ENCODE measurements at regions of chr22 and their contacts with region 1.

Region 1: GRCh38 chr22:22903355-22903777 is 15.8 kb downstream of the IGLL5 start:
- DNase-seq: no peak
- ATAC-seq: peak; percentile 0; the same call in 1 of the 3 replicates
- H3K4me3 ChIP-seq: no peak overlapping the region
- H3K27ac ChIP-seq: peak overlapping the region; percentile 93
- H3K4me1 ChIP-seq: peaks cover 28% of the 10 kb centered on the region
- H3K27me3 ChIP-seq: no peaks in the 10 kb centered on the region
- CTCF ChIP-seq: no peak
- EP300 ChIP-seq: no peak
- POLR2A ChIP-seq: no peak
- RAD21 ChIP-seq: no peak

Region 2: DNA sequence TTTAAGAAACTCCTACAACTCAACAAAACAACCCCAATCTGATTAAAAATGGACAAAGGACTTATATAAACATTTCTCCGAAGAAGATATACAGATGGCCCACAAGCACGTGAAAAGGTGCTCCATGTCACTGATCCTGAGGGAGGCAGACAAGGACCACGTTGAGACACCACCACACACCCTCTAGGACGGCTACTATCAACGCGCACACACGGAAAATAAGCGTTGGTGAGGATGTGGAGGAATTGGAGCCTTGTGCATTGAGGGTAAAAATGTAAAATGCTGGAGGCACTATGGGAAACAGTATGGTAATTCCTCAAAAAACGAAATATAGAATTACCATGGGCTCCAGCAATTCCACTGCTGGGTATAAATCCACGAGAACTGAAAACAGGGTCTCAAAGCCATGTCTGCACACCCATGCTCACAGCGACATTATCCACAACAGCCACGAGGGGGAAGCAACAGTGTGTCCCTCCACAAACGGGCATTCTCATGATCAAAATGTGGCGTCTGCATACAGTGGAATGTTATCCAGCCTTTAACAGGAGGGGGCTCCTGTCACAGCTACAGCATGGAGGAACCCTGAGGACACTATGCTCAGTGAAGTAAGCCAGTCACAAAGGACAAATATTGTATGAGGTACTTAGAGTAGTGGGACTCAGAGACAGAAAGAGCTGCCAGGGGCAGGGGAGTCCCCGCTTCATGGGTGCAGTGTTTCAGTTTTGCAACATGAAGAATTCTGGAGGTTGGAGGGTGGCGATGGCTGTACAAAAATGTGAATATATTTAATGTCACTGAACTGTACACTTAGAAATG is 1190.3 kb before region 1 on chr22:
- CTCF ChIA-PET with region 1: no interaction called
- POLR2A ChIA-PET with region 1: no interaction called
- RAD21 ChIA-PET with region 1: no interaction called
- SMC1A ChIA-PET with region 1: no interaction called
- in situ Hi-C with region 1: loop called (anchors 25 kb)
- intact Hi-C with region 1: no loop called
- DNase-seq: peak; percentile 25
- ATAC-seq: peak; percentile 97
- H3K4me3 ChIP-seq: no peak overlapping the region
- H3K27ac ChIP-seq: no peak overlapping the region
- H3K4me1 ChIP-seq: no peaks in the 10 kb centered on the region
- H3K27me3 ChIP-seq: no peaks in the 10 kb centered on the region
- CTCF ChIP-seq: peak; percentile 79 to 91 (median 84)
- EP300 ChIP-seq: no peak
- POLR2A ChIP-seq: no peak
- RAD21 ChIP-seq: peak; percentile 93

Region 3: DNA sequence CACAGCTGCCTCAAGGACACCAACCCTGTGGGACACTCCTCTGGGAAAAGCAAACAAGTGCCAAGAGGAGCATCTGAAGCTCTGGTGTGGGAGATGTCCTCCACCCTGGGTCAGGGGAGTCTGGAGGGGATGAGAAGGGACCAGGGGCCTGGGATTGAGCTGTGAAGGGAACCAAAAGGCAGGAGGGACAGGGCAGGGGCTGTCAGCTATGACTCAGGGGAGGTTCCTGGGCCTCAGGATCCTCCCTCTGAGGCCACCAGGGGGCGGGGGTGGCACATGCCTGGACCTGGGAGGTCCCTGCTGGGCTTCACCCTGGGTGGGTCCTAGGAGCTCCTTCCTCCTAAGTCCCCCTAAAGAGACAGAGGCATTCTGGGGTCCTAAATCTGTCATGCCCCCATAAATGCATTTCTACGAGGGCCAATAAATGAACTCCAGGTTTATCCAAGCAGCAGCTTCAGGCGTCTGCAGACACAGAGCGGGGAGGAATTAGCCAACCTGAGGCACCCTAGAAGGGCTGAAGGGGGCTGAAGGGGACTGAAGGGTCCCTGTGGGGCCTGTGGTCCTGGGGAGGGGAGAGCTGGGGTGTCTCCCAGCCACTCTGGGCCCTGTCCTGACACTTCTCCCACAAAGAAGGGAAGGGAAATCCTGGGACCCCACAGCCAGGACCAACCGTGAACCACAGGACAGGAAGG is 47.6 kb before region 1 on chr22:
- CTCF ChIA-PET with region 1: interaction called, 34 read pairs
- POLR2A ChIA-PET with region 1: interaction called, 37 read pairs
- RAD21 ChIA-PET with region 1: interaction called, 39 read pairs
- SMC1A ChIA-PET with region 1: interaction called, 36 read pairs
- in situ Hi-C with region 1: no loop called
- intact Hi-C with region 1: loop called (anchors 1 kb)
- DNase-seq: no peak
- ATAC-seq: peak; percentile 95
- H3K4me3 ChIP-seq: no peak overlapping the region
- H3K27ac ChIP-seq: peak overlapping the region; percentile 73
- H3K4me1 ChIP-seq: no peaks in the 10 kb centered on the region
- H3K27me3 ChIP-seq: no peaks in the 10 kb centered on the region
- CTCF ChIP-seq: peak; percentile 27 to 70 (median 60); a peak in 5 of 6 replicates
- EP300 ChIP-seq: no peak
- POLR2A ChIP-seq: no peak
- RAD21 ChIP-seq: no peak

Region 4: DNA sequence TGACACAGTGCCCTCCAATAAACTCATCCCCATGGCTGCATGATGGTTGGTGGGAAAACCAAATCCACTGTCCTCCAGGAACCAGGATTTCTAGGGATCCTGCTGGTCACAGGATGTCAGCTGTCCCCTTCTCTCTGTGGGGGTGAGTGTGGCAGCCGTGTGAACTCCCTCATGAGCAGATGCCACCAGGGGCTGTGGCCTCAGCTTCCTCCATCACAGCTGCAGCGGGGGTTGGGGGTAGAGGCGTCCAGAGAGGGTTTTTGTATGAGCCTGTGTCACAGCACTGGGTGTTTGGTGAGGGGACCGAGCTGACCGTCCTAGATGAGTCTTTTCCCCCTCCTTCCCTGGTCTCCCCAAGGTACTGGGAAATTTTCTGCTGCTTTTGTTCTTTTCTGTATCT is 10.6 kb after region 1 on chr22:
- CTCF ChIA-PET with region 1: interaction called, 4 read pairs
- POLR2A ChIA-PET with region 1: interaction called, 21 read pairs
- RAD21 ChIA-PET with region 1: interaction called, 4 read pairs
- SMC1A ChIA-PET with region 1: interaction called, 18 read pairs
- in situ Hi-C with region 1: no loop called
- intact Hi-C with region 1: no loop called
- DNase-seq: no peak
- ATAC-seq: peak; percentile 61
- H3K4me3 ChIP-seq: no peak overlapping the region
- H3K27ac ChIP-seq: no peak overlapping the region
- H3K4me1 ChIP-seq: peaks cover 31% of the 10 kb centered on the region
- H3K27me3 ChIP-seq: no peaks in the 10 kb centered on the region
- CTCF ChIP-seq: no peak
- EP300 ChIP-seq: no peak
- POLR2A ChIP-seq: no peak
- RAD21 ChIP-seq: no peak

Region 5: GRCh38 chr22:22928666-22929380 is 25.5 kb after region 1 on chr22:
- CTCF ChIA-PET with region 1: interaction called, 117 read pairs
- POLR2A ChIA-PET with region 1: interaction called, 153 read pairs
- RAD21 ChIA-PET with region 1: interaction called, 91 read pairs
- SMC1A ChIA-PET with region 1: interaction called, 154 read pairs
- in situ Hi-C with region 1: no loop called
- intact Hi-C with region 1: loop called (anchors 1 kb)
- DNase-seq: peak; percentile 99
- ATAC-seq: peak; percentile 87
- H3K4me3 ChIP-seq: peak overlapping the region; percentile 14; the same call in 1 of the 2 replicates
- H3K27ac ChIP-seq: peak overlapping the region; percentile 99
- H3K4me1 ChIP-seq: peaks cover 81% of the 10 kb centered on the region
- H3K27me3 ChIP-seq: no peaks in the 10 kb centered on the region
- CTCF ChIP-seq: no peak
- EP300 ChIP-seq: peak; percentile 86 to 89; a peak in 3 of 4 replicates
- POLR2A ChIP-seq: peak; percentile 88
- RAD21 ChIP-seq: peak; percentile 27; the same call in 1 of the 2 replicates

Region 6: DNA sequence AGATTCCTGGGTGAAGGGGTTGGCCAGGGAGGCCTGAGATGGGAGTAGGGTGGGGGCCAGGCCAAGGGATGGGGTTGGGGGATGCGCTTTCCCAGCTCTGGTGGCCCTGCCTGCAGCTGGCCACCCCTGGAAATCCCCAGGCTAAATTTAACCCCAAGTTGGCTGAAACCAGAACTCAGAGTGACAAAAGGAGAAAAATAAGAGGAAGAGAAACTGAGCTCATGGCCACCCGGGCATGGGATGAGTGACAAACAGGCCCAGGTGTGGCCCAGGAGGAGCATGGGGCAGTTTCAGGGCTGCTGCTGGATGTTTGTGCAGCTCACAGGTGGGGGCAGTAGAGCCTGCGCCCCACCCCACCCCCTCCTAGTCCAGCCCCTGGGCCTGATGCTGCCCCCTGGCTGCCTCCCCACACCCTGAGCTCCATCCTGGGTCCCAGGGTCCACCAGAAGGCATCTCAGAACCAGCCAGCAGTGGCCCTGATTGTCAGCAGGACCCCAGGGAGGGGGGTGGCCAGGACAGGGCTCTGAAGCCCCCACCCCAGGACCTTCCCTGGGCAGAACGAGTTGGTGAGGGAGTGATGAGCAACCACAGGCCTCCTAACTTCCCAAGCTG is 32.3 kb after region 1 on chr22:
- CTCF ChIA-PET with region 1: interaction called, 117 read pairs
- POLR2A ChIA-PET with region 1: interaction called, 153 read pairs
- RAD21 ChIA-PET with region 1: interaction called, 91 read pairs
- SMC1A ChIA-PET with region 1: interaction called, 154 read pairs
- in situ Hi-C with region 1: loop called (anchors 5 kb)
- intact Hi-C with region 1: loop called (anchors 1 kb)
- DNase-seq: peak; percentile 99
- ATAC-seq: peak; percentile 84
- H3K4me3 ChIP-seq: peak overlapping the region; percentile 24; the same call in 1 of the 2 replicates
- H3K27ac ChIP-seq: peak overlapping the region; percentile 99
- H3K4me1 ChIP-seq: peaks cover 92% of the 10 kb centered on the region
- H3K27me3 ChIP-seq: no peaks in the 10 kb centered on the region
- CTCF ChIP-seq: peak; percentile 53 to 83 (median 71)
- EP300 ChIP-seq: peak; percentile 100
- POLR2A ChIP-seq: no peak; the same call in 1 of the 2 replicates
- RAD21 ChIP-seq: peak; percentile 75

Region 7: DNA sequence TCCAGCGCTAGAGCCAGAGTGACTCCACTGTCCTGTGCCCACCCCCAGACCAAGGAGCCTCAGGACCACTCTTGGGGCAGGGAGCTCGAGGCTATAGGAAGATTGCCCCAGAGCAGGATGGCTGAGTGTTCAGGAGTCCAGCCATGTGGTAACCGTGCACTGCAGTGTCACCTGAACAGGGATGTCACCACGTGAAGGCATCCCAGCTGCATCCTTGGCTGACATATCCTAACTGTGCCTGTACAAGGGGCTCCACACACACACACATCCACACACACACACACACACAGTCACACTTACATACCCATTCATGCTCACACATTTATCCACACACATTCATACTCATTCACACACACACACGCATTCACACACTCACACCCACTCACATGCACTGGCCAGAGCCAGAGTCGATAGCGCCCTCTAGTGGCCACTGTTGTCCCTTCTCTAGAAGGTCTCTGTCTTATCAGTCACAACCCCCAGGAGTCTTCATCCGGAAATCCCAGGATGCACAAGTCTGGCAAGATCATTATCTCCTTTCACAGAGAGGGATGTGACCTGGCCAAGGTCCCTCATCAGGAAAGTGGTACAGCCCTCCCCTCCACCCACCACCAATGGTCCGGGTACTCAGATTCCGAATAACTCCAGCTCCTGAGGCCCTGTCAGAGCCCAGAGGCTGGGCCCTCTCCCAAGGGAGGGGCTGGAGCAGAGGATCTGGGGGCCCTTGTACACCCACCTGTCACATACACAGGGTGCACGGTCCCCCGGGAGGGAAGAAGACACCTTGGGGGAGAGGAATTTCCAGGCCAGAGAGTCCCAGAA is 39.4 kb after region 1 on chr22:
- CTCF ChIA-PET with region 1: interaction called, 38 read pairs
- POLR2A ChIA-PET with region 1: interaction called, 153 read pairs
- RAD21 ChIA-PET with region 1: interaction called, 91 read pairs
- SMC1A ChIA-PET with region 1: interaction called, 154 read pairs
- in situ Hi-C with region 1: loop called (anchors 5 kb)
- intact Hi-C with region 1: loop called (anchors 1 kb)
- DNase-seq: peak; percentile 78
- ATAC-seq: peak; percentile 89
- H3K4me3 ChIP-seq: no peak overlapping the region
- H3K27ac ChIP-seq: peak overlapping the region; percentile 92
- H3K4me1 ChIP-seq: peaks cover 90% of the 10 kb centered on the region
- H3K27me3 ChIP-seq: no peaks in the 10 kb centered on the region
- CTCF ChIP-seq: peak; percentile 84 to 96 (median 87)
- EP300 ChIP-seq: 0 out of 4 replicates have a peak, but pooled peaks of 1 of the 2 experiments have one; percentile 61
- POLR2A ChIP-seq: no peak; the same call in 1 of the 2 replicates
- RAD21 ChIP-seq: peak; percentile 94

Region 8: DNA sequence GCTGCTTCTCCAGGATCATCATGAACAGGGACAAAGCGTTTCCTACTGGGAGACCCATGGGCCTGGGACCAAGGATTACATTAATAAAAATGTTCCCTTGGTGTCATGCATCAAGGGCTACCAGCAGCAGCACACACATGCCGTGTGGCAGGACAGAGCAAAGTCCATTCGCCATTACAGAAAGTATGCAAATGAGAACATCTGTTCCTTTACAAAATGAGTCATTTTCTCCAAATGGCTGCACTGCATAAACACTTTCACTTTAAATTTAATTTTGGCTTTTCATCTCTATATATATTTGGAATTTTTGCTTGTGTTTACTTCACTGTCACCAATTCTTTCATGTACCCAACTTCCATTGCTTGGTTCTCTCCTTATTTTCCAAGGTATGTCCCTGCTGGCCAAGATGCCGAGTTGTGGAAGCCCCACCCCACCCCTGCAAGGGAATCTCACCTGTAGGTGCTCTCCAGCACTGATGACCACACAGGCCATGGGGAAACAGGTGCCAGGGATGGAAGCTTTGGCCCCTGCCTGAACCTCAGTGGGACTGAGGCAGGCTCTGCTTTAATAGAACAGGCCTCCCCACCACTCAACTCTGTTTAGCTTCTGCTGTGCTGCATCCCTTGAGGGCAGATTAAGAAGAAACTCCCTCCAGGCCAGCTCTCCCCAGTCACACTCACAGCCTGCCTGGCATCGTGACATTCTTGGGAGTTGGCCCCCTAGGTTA is 151.3 kb after region 1 on chr22:
- CTCF ChIA-PET with region 1: no interaction called
- POLR2A ChIA-PET with region 1: no interaction called
- RAD21 ChIA-PET with region 1: no interaction called
- SMC1A ChIA-PET with region 1: no interaction called
- in situ Hi-C with region 1: no loop called
- intact Hi-C with region 1: no loop called
- DNase-seq: peak; percentile 55
- ATAC-seq: peak; percentile 97
- H3K4me3 ChIP-seq: peak overlapping the region; percentile 32; the same call in 1 of the 2 replicates
- H3K27ac ChIP-seq: peak overlapping the region; percentile 45; the same call in 1 of the 2 replicates
- H3K4me1 ChIP-seq: peaks cover 13% of the 10 kb centered on the region
- H3K27me3 ChIP-seq: no peaks in the 10 kb centered on the region
- CTCF ChIP-seq: no peak
- EP300 ChIP-seq: peak; percentile 27 to 53; a peak in 2 of 4 replicates
- POLR2A ChIP-seq: no peak
- RAD21 ChIP-seq: no peak

Measured in GM12878 (cell line).